ENCODE measurements at regions of chr3 and their contacts with region 1.

Region 1: DNA sequence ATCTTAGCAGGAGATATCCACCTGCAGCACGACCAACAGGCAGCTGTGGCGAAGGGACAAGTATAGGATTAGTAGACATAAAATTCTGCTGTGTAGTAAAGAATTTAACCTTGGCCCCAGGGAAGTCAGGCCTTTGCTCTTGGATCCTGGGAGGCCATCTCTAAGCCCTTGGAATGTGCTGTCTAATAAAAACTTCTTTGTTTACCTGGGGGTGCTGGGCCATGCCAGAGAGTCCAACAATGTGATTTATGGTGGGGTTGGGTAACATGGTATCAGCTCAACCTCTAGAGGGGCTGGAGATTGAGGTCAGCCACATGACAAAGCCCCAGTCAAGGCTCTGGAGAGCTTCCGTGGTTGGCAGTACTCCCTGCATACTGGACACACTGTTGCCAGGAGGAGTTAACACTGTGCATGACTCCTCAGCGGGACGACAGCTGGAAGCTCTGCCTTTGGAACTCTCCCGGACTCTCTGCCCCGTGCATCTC is 52.4 kb downstream of the HEG1 start:
- DNase-seq: peak; percentile 31
- H3K4me3 ChIP-seq: no peak overlapping the region
- H3K27ac ChIP-seq: peak overlapping the region in 1 of 2 donors; percentile 4
- H3K4me1 ChIP-seq: peaks cover 14% of the 10 kb centered on the region
- H3K27me3 ChIP-seq: no peaks in the 10 kb centered on the region
- CTCF ChIP-seq: no peak
- POLR2A ChIP-seq: no peak

Region 2: GRCh38 chr3:124935264-124935663 is 68.1 kb before region 1 on chr3:
- intact Hi-C with region 1: no loop called
- DNase-seq: no peak
- H3K4me3 ChIP-seq: no peak overlapping the region
- H3K27ac ChIP-seq: no peak overlapping the region
- H3K4me1 ChIP-seq: no peaks in the 10 kb centered on the region
- H3K27me3 ChIP-seq: no peaks in the 10 kb centered on the region
- CTCF ChIP-seq: no peak
- POLR2A ChIP-seq: no peak

Region 3: DNA sequence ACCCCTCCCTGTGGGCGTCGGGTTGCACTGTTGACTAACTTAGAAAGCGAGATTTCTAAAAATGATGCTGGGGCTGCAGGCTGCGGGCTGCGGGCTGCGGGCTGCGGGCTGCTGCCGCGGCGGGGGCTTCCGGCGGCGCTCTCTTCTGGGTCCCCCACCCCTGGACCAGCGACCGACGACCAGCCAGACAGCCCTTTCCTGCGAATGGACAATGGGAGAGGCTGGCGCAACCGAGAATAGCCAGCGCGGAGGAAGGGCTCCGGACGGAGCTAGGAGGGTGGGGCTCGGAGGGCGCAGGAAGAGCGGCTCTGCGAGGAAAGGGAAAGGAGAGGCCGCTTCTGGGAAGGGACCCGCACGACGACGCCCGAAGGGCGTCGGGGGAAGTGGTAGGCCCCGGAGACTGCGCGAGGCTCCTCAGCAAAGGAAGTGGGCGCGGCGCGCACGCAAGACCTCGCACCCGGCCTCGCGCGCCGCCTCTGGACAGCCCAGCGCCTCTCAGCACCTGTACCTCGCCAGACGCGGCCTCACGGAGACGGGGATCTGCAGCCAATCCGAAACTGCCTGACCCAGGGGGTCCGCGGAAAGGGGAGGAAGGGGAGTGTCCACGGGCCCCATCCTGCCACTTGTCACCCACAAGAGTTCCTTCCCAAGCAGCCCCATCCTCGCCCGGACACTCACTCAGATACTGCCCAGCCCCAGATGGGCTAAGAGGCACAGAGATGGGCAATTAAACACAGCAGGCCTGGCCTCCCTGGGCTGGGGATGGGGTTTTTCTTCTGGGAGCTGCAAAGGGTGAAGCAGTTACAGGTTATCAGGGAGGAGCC is 138.4 kb after region 1 on chr3:
- intact Hi-C with region 1: loop called (anchors 5 kb)
- DNase-seq: peak; percentile 14
- H3K4me3 ChIP-seq: peak overlapping the region; percentile 26 to 29
- H3K27ac ChIP-seq: peak overlapping the region in 1 of 2 donors; percentile 32
- H3K4me1 ChIP-seq: peaks cover 4% of the 10 kb centered on the region
- H3K27me3 ChIP-seq: no peaks in the 10 kb centered on the region
- CTCF ChIP-seq: peak in 2 of 4 experiments; percentile 45 to 53
- POLR2A ChIP-seq: no peak